Activated CD8-positive, alpha-beta T cell treated with anti-CD3 and anti-CD28 coated beads for 36 hours (primary cell): ENCODE measurements at regions of chr5 and their contacts with region 1.

Region 1: GRCh38 chr5:115246361-115246991 is 16.2 kb downstream of the PGGT1B start:
- DNase-seq: no peak
- ATAC-seq: peak; percentile 62
- H3K4me3 Mint-ChIP-seq: no peak overlapping the region
- H3K27ac Mint-ChIP-seq: no peak overlapping the region
- H3K4me1 Mint-ChIP-seq: peaks cover 20% of the 10 kb centered on the region
- H3K27me3 Mint-ChIP-seq: no peaks in the 10 kb centered on the region
- CTCF ChIP-seq: peak; percentile 82

Region 2: GRCh38 chr5:115098041-115098702 is 148.3 kb before region 1 on chr5:
- CTCF ChIA-PET with region 1: interaction called, 79 read pairs
- POLR2A ChIA-PET with region 1: no interaction called
- intact Hi-C with region 1: loop called (anchors 1 kb)
- DNase-seq: peak; percentile 54
- ATAC-seq: peak; percentile 84
- H3K4me3 Mint-ChIP-seq: no peak overlapping the region
- H3K27ac Mint-ChIP-seq: no peak overlapping the region
- H3K4me1 Mint-ChIP-seq: no peaks in the 10 kb centered on the region
- H3K27me3 Mint-ChIP-seq: peaks cover 10% of the 10 kb centered on the region
- CTCF ChIP-seq: peak; percentile 77

Region 3: GRCh38 chr5:115169487-115170133 is 76.9 kb before region 1 on chr5 and contains the start of gene TRIM36:
- CTCF ChIA-PET with region 1: no interaction called
- POLR2A ChIA-PET with region 1: no interaction called
- intact Hi-C with region 1: loop called (anchors 5 kb)
- DNase-seq: peak; percentile 94
- ATAC-seq: peak; percentile 96
- H3K4me3 Mint-ChIP-seq: peak within 1 kb of the TSS; percentile 78
- H3K27ac Mint-ChIP-seq: no peak within 1 kb of the TSS
- H3K4me1 Mint-ChIP-seq: peaks cover 10% of the 10 kb centered on the region
- H3K27me3 Mint-ChIP-seq: peaks cover 54% of the 10 kb centered on the region
- CTCF ChIP-seq: no peak
- total RNA-seq, gene TRIM36: 0.18 to 0.72 TPM

Region 4: DNA sequence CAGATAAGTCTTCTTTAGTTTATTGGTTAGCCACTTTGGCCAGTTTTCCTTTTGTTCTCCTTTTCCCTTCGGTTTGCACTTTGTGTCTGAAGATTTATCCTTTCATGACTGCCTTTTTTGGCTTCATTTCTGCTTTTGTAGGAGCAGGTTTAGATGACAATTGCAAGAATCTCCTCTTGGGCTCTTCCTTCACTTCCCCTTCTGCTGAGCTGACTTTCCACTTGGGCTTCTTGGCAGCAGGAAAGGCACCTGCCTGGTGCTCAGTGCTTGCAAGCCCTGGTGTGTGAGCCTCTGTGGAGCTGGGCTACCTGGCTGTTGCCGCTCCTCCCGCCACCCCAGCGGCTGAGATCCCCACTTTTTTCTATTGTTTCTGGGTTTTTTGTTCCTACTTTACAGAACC is 42.6 kb after region 1 on chr5:
- CTCF ChIA-PET with region 1: no interaction called
- POLR2A ChIA-PET with region 1: no interaction called
- intact Hi-C with region 1: no loop called
- DNase-seq: no peak
- ATAC-seq: no peak
- H3K4me3 Mint-ChIP-seq: no peak overlapping the region
- H3K27ac Mint-ChIP-seq: no peak overlapping the region
- H3K4me1 Mint-ChIP-seq: peaks cover 8% of the 10 kb centered on the region
- H3K27me3 Mint-ChIP-seq: peaks cover 7% of the 10 kb centered on the region
- CTCF ChIP-seq: no peak

Region 5: GRCh38 chr5:115333164-115333563 is 86.7 kb after region 1 on chr5:
- CTCF ChIA-PET with region 1: no interaction called
- POLR2A ChIA-PET with region 1: no interaction called
- intact Hi-C with region 1: no loop called
- DNase-seq: peak; percentile 41
- ATAC-seq: peak; percentile 91
- H3K4me3 Mint-ChIP-seq: no peak overlapping the region
- H3K27ac Mint-ChIP-seq: no peak overlapping the region
- H3K4me1 Mint-ChIP-seq: peaks cover 11% of the 10 kb centered on the region
- H3K27me3 Mint-ChIP-seq: peaks cover 14% of the 10 kb centered on the region
- CTCF ChIP-seq: no peak

Region 6: GRCh38 chr5:115985802-115986757 is 739.6 kb after region 1 on chr5:
- CTCF ChIA-PET with region 1: no interaction called
- POLR2A ChIA-PET with region 1: no interaction called
- intact Hi-C with region 1: no loop called
- DNase-seq: no peak
- ATAC-seq: no peak
- H3K4me3 Mint-ChIP-seq: no peak overlapping the region
- H3K27ac Mint-ChIP-seq: no peak overlapping the region
- H3K4me1 Mint-ChIP-seq: no peaks in the 10 kb centered on the region
- H3K27me3 Mint-ChIP-seq: peaks cover 5% of the 10 kb centered on the region
- CTCF ChIP-seq: no peak